ENCODE measurements at regions of chr20 and their contacts with region 1.

Region 1: GRCh38 chr20:35741892-35742740 is at the start of gene RBM39:
- DNase-seq: peak; percentile 95
- ATAC-seq: peak; percentile 87
- H3K4me3 Mint-ChIP-seq: peak within 1 kb of the TSS; percentile 94
- H3K27ac Mint-ChIP-seq: peak within 1 kb of the TSS; percentile 98
- H3K4me1 Mint-ChIP-seq: peaks cover 38% of the 10 kb centered on the region
- H3K27me3 Mint-ChIP-seq: no peaks in the 10 kb centered on the region
- total RNA-seq, gene RBM39: 478 to 499 TPM

Region 2: GRCh38 chr20:35490736-35491181 is 251.4 kb before region 1 on chr20:
- POLR2A ChIA-PET with region 1: interaction called, 24 read pairs
- DNase-seq: peak; percentile 70
- ATAC-seq: peak; percentile 98
- H3K4me3 Mint-ChIP-seq: peak overlapping the region; percentile 99
- H3K27ac Mint-ChIP-seq: peak overlapping the region; percentile 99
- H3K4me1 Mint-ChIP-seq: peaks cover 33% of the 10 kb centered on the region
- H3K27me3 Mint-ChIP-seq: no peaks in the 10 kb centered on the region

Region 3: DNA sequence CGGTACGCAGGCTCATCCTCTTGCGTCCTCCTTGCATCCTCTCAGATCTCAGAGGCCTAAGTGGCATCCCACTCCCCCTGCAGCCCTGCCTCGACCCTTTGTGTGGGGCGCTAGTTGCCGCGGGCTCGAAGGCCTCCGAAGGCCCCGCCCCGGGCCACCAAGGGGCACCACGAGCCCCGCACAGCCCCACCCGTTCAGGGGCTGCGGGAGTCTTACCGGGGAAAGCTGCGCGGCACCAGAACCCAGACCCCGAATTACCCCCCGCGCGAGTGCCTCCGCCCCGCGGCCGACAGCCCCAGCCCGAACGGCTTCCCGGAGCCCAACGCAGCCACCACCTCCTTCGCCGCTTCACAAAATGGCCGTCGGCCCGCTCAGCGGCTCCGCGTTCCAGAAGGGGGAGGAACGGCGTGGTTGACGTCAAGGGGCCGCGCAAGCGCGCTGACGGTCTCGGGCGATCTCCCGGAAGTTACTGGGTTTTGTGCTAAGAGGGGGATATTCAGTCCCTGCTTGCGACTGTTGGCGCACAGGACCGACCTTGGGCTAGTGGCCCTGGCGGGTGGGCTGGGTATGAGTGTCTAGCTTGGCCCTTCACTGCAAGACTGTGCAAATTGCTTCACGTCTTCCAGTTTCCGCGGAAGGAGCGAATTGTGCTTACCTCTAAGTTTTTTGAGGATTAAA is 77.4 kb before region 1 on chr20 and contains the starts of genes CPNE1 and RBM12:
- POLR2A ChIA-PET with region 1: interaction called, 54 read pairs
- DNase-seq: peak; percentile 96
- ATAC-seq: peak; percentile 82
- H3K4me3 Mint-ChIP-seq: peak within 1 kb of the TSS; percentile 79
- H3K27ac Mint-ChIP-seq: peak within 1 kb of the TSS; percentile 99
- H3K4me1 Mint-ChIP-seq: peaks cover 35% of the 10 kb centered on the region
- H3K27me3 Mint-ChIP-seq: no peaks in the 10 kb centered on the region
- total RNA-seq, gene CPNE1: 296 to 327 TPM
- total RNA-seq, gene RBM12: 116 to 120 TPM

Region 4: DNA sequence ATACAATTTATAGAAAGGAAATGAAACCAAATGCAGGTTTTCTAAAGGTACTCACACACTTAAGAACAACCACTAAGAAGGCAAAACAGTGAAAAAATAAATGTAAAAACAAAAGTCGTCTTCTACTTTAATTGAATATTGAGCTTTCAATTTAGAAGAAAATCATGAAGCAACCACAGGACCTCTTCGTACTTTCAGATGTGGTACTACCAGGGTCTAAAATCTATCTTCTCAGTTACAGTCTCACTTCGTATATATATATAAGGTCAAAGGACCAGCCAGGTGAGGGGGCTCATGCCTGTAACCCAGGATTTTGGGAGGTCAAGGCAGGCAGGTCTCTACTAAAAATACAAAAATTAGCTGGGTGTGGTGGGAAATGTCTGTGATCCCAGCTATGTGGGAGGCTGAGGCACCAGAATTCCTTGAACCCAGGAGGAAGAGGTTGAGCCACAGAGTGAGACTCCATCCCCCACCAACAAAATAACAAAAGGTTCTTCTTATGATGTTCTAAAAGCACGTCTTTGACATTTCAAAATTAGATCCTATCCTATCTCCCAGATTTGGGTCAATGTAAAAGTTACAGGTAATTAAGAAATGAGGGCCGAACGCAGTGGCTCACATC is 30.4 kb before region 1 on chr20:
- POLR2A ChIA-PET with region 1: interaction called, 10 read pairs
- DNase-seq: no peak
- ATAC-seq: peak; percentile 43
- H3K4me3 Mint-ChIP-seq: peak overlapping the region; percentile 66
- H3K27ac Mint-ChIP-seq: peak overlapping the region; percentile 65
- H3K4me1 Mint-ChIP-seq: peaks cover 39% of the 10 kb centered on the region
- H3K27me3 Mint-ChIP-seq: no peaks in the 10 kb centered on the region

Region 5: DNA sequence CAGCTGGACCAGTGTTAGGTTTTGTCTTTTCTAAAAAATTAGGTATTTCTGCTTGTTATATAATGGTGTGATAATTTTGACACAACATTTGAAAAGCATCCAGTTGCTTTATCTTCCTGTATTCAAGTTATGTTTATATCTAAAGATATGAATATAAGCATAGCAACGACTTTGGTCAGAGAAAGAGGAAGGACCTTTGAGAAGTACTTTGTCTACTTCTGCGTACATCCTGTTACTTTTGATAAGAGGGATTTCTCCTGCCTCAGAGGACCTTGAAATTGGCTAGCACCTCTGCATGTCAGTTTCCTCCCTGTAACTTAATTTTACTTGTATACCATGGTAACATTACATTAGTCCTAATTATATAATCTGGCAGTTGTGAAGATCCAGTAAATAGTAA is 54.5 kb after region 1 on chr20:
- POLR2A ChIA-PET with region 1: interaction called, 11 read pairs
- DNase-seq: no peak
- ATAC-seq: peak; percentile 47
- H3K4me3 Mint-ChIP-seq: peak overlapping the region; percentile 13
- H3K27ac Mint-ChIP-seq: peak overlapping the region; percentile 64
- H3K4me1 Mint-ChIP-seq: peaks cover 15% of the 10 kb centered on the region
- H3K27me3 Mint-ChIP-seq: no peaks in the 10 kb centered on the region

Region 6: DNA sequence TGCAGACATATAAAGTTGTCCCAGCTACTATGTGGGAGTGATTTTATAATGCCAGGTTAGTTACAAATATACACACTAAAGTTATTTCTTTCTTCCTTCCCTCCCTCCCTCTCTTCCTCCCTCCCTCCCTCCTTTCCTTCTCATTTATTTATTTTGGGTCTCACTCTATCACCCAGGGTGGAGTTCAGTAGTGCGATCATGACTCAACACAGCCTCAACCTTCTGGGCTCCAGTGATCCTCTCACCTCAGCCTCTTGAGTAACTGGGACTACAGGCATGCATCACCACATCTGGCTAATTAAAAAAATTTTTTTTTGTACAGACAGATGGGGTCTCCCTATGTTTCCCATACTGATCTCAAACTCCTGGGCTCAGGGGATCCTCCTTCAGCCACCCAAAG is 88.9 kb after region 1 on chr20:
- POLR2A ChIA-PET with region 1: no interaction called
- DNase-seq: no peak
- ATAC-seq: no peak
- H3K4me3 Mint-ChIP-seq: no peak overlapping the region
- H3K27ac Mint-ChIP-seq: no peak overlapping the region
- H3K4me1 Mint-ChIP-seq: peaks cover 25% of the 10 kb centered on the region
- H3K27me3 Mint-ChIP-seq: no peaks in the 10 kb centered on the region

Region 7: GRCh38 chr20:35954200-35954906 is 212.2 kb after region 1 on chr20 and contains the start of gene SCAND1:
- POLR2A ChIA-PET with region 1: interaction called, 89 read pairs
- DNase-seq: peak; percentile 98
- ATAC-seq: peak; percentile 91
- H3K4me3 Mint-ChIP-seq: peak within 1 kb of the TSS; percentile 99
- H3K27ac Mint-ChIP-seq: peak within 1 kb of the TSS; percentile 100
- H3K4me1 Mint-ChIP-seq: peaks cover 8% of the 10 kb centered on the region
- H3K27me3 Mint-ChIP-seq: no peaks in the 10 kb centered on the region
- total RNA-seq, gene SCAND1: 57.8 to 60.9 TPM

Measured in activated naive CD8-positive, alpha-beta T cell treated with anti-CD3 and anti-CD28 coated beads, Interleukin-2, amount 10 ng/mL, durations not matched to agents 7 days and 5 days (primary cell).